ENCODE measurements at regions of chr12 and their contacts with region 1.

Region 1: DNA sequence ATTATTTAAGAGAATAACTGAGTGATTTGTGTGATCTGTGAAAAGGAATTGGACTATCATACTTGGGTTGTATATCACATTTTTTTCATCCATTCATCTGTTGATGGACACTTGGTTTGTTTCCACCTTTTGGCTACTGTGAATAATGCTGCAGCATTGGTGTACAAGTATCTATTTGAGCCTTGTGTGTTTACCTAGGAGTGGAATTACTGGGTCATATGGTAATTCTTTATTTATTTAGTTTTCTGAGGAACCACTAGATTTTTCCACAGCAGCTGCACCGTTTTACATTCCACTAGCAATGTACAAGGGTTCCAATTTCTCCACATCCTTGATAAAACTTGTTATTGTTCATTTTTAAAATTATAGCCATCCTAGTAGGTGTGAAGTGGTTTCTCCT is 56.1 kb downstream of the APAF1 start:
- DNase-seq: no peak

Region 2: GRCh38 chr12:97943364-97943763 is 757.8 kb before region 1 on chr12:
- intact Hi-C with region 1: no loop called
- DNase-seq: no peak

Region 3: DNA sequence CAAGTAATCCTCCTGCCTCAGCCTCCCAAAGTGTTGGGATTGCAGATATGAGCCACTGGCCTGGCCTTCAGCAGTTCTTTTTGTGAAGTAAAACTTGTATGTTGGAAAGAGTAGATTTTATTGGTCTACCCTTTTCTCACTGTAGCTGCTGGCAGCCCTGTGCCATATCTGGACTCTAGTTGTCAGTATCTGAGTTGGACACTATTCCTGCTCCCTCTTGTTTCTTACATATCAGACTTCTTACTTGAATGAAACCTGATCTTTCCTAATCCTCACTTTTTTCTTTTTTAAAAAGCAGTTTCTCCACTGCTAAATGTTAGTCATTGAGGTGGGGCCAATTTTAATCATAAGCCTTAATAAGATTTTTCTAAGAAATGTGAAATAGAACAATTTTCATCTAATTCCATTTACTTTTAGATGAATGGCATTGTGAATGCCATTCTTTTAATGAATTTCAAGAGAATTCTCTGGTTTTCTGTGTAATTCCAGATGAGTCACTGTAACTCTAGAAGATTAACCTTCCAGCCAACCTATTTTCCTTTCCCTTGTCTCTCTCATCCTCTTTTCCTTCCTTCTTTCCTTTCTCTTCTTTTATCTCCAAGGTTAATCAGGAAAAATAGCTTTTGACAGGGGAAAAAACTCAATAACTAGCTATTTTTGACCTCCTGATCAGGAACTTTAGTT is 32.6 kb after region 1 on chr12:
- intact Hi-C with region 1: loop called in 1 of 2 experiments (anchors 2 kb)
- DNase-seq: no peak

Region 4: DNA sequence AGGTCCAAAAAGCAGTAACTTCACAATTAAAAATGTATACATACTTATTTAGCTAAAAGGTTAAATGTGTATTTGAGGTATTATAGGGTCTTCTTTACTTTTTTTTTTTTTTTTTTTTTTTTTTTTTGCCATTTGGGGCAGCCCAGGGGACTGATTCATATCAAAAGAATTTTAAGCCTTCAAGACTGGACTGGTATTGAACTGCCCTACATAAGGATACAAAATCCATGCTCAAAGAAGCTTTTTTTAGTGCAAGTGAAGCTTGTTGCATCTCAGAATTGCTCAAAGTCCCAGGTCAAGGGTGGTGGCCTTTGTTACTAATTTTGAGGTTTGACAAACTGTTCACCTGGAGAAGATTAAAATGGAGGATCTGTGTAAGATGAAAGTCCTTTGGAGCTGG is 67.9 kb after region 1 on chr12:
- intact Hi-C with region 1: no loop called
- DNase-seq: no peak